MCF 10A (cell line): ENCODE measurements at regions of chr2 and their contacts with region 1.

Region 1: GRCh38 chr2:121076885-121077549 is 208.0 kb downstream of the TFCP2L1 start:
- DNase-seq: peak; percentile 79
- H3K4me3 Mint-ChIP-seq: no peak overlapping the region
- H3K27ac Mint-ChIP-seq: no peak overlapping the region
- H3K4me1 Mint-ChIP-seq: peaks cover 6% of the 10 kb centered on the region
- H3K27me3 Mint-ChIP-seq: no peaks in the 10 kb centered on the region
- CTCF ChIP-seq: peak; percentile 93

Region 2: DNA sequence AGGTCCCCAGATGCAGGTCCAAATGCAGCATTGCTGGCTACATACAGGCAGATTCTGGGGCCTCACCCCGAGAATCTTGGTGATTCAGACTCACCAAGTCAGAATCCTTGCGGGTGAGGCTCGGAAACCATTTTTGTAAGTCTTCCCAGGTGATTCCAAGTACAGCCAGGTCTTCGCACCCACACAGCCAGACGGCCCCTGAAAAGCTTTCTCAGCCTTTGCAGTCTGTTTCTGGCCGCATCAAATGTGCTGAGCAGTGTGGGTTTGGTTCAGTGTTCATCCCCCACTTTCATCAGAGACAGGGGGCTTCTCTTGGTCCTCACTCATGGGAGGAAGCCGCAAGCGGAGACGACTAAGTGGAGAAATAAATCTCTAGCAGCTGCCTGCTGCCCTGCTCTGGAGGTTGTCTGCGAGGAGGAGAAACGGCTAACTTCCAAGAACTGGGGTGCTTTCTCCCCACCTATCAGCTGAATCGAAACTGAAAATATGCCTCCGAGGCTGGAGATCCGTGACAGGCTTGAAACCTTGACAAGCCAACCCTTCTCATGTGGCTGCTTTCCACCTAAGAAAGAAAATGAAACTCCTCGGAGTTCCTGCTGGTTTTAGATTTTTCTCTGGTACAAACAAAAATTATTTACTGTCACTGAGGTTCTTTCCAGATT is 844.9 kb before region 1 on chr2:
- CTCF ChIA-PET with region 1: no interaction called
- POLR2A ChIA-PET with region 1: no interaction called
- intact Hi-C with region 1: loop called (anchors 10 kb)
- DNase-seq: no peak
- H3K4me3 Mint-ChIP-seq: peak overlapping the region; percentile 67
- H3K27ac Mint-ChIP-seq: no peak overlapping the region
- H3K4me1 Mint-ChIP-seq: no peaks in the 10 kb centered on the region
- H3K27me3 Mint-ChIP-seq: no peaks in the 10 kb centered on the region
- CTCF ChIP-seq: no peak

Region 3: DNA sequence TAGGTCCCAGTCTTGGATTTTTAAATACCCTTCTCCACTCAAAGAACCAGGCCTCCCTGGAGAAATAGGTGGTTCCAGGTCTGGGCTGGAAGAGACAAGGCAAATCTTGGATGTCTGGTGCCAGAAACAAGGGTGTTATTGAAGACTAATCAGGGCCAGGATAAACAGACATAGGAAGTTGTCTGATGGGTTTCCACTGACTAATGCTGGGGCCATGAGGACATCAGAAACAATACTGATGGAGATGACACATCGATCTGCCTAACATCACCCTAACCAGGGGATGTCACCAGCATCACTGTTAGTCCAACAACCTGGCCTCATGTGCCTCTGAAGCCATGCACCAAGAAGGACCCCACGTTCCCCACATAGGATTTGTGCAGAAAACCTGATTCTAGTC is 383.9 kb before region 1 on chr2:
- CTCF ChIA-PET with region 1: interaction called, 541 read pairs
- POLR2A ChIA-PET with region 1: interaction called, 3 read pairs
- intact Hi-C with region 1: loop called (anchors 1 kb)
- DNase-seq: no peak
- H3K4me3 Mint-ChIP-seq: no peak overlapping the region
- H3K27ac Mint-ChIP-seq: no peak overlapping the region
- H3K4me1 Mint-ChIP-seq: peaks cover 5% of the 10 kb centered on the region
- H3K27me3 Mint-ChIP-seq: peaks cover 29% of the 10 kb centered on the region
- CTCF ChIP-seq: no peak

Region 4: DNA sequence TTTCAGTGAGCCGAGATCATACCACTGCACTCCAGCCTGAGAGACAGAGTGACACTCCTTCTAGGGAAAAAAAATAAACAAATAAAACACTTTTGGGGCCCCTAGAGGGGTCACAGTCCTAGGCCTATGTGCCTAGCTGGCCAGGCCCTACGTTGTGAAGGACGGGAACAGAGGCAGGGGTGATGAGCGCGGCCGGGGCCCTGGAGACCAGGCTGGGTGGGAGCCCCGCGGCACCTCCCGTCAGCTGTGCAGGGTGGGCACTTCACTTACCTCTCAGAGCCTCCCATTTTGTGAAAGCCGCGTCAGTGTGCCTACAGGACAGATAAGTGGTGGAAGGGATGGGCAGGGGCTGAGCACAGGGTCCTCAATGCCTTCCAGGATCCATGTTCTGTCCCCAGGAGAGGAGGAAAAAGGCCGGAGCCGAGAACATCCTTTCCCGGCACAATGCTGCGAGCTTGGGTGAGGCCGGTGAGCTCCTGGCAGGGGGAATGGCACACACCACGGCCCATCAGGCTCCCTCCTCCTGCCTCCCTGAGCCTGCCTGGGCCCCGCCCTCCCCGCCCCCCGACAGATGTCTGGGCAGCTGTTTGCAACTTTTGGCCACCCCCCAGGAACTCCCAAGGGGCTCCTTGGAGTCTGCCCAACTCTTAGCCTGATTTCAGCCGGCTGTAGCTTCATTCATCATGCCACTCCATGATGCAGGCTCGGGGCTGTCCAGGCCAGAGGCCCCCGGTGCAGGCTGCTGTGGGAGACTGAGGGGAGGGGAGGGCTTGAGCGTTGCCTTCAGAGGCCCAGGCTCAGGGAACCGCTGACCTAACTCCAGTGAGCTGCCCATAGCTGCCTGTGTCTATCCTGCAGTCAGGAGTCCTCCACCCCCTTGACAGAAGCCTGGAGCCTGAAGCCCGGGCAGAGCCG is 11.5 kb after region 1 on chr2:
- CTCF ChIA-PET with region 1: interaction called, 62 read pairs
- POLR2A ChIA-PET with region 1: no interaction called
- intact Hi-C with region 1: no loop called
- DNase-seq: no peak
- H3K4me3 Mint-ChIP-seq: no peak overlapping the region
- H3K27ac Mint-ChIP-seq: no peak overlapping the region
- H3K4me1 Mint-ChIP-seq: peaks cover under 1% of the 10 kb centered on the region
- H3K27me3 Mint-ChIP-seq: no peaks in the 10 kb centered on the region
- CTCF ChIP-seq: no peak

Region 5: GRCh38 chr2:121345887-121346286 is 268.9 kb after region 1 on chr2:
- CTCF ChIA-PET with region 1: interaction called, 15 read pairs
- POLR2A ChIA-PET with region 1: no interaction called
- intact Hi-C with region 1: no loop called
- DNase-seq: no peak
- H3K4me3 Mint-ChIP-seq: no peak overlapping the region
- H3K27ac Mint-ChIP-seq: no peak overlapping the region
- H3K4me1 Mint-ChIP-seq: peaks cover 15% of the 10 kb centered on the region
- H3K27me3 Mint-ChIP-seq: no peaks in the 10 kb centered on the region
- CTCF ChIP-seq: no peak

Region 6: GRCh38 chr2:121710470-121711170 is 633.6 kb after region 1 on chr2:
- CTCF ChIA-PET with region 1: no interaction called
- POLR2A ChIA-PET with region 1: no interaction called
- intact Hi-C with region 1: loop called (anchors 10 kb)
- DNase-seq: no peak
- H3K4me3 Mint-ChIP-seq: no peak overlapping the region
- H3K27ac Mint-ChIP-seq: peak overlapping the region; percentile 71
- H3K4me1 Mint-ChIP-seq: peaks cover 12% of the 10 kb centered on the region
- H3K27me3 Mint-ChIP-seq: no peaks in the 10 kb centered on the region
- CTCF ChIP-seq: no peak